GM12878 (cell line): ENCODE measurements at regions of chr1 and their contacts with region 1.

Region 1: DNA sequence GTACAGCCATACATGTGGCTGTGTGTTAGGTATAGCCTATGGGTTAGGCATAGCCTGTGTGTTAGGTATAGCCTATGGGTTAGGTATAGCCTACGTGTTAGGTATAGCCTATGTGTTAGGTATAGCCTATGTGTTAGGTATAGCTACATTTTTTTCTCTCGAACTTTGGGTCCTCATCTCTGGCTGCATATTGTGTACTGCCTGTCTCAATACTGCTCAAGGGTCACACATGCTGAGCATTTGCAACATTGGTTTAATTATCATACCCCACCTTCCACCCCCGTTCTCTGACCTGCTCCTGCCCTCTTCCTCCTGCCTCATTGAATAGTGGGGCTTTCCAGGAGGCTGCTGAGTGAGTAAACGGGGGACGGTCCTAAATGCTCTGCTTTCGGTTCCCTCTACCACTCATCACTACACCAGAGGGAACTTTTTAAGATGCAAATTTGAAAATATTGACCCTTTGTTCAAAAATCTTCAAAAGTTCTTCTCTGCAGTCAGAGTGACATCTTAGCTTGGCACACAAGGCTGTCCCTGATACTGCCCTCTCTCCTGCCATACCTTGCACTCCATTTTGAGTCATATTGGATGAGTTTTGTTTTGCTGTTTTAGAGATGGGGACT is 17.8 kb downstream of the OR2B11 start:
- DNase-seq: peak; percentile 81
- ATAC-seq: peak; percentile 96
- H3K4me3 ChIP-seq: no peak overlapping the region; the same call in 1 of the 2 replicates
- H3K27ac ChIP-seq: peak overlapping the region; percentile 63; the same call in 1 of the 2 replicates
- H3K4me1 ChIP-seq: peaks cover 29% of the 10 kb centered on the region
- H3K27me3 ChIP-seq: no peaks in the 10 kb centered on the region; a peak in 1 of 4 replicates
- CTCF ChIP-seq: no peak
- EP300 ChIP-seq: peak; percentile 92 to 95; a peak in 3 of 4 replicates
- POLR2A ChIP-seq: no peak
- RAD21 ChIP-seq: peak; percentile 13; the same call in 1 of the 2 replicates

Region 2: DNA sequence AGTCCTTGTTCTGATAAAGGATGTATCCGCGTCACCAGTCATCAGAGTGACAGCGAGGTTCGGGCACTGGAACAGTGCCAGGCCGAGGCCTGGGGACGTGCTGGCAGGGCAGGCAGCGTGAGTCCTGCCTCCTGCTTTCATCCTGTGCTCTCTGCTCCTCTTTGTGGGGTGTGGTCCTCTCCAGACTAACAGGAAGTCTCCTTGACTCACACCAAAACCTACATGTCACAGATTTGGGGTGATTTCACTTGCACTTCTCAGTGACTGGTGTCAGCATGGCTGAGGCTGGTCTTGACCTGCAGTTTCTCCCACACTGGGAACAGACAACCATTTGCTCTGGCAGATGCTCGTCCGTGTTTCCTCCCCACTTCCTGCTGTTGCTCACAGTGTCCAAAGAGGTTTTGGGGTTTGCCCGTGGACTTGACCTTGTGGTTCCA is 32.9 kb before region 1 on chr1:
- CTCF ChIA-PET with region 1: interaction called, 3 read pairs
- POLR2A ChIA-PET with region 1: interaction called, 3 read pairs
- RAD21 ChIA-PET with region 1: interaction called, 3 read pairs
- SMC1A ChIA-PET with region 1: interaction called, 6 read pairs
- in situ Hi-C with region 1: no loop called
- intact Hi-C with region 1: loop called (anchors 1 kb)
- DNase-seq: peak; percentile 85
- ATAC-seq: peak; percentile 81
- H3K4me3 ChIP-seq: 0 out of 2 replicates have a peak overlapping the region, but pooled peaks have one; percentile 9
- H3K27ac ChIP-seq: peak overlapping the region; percentile 63
- H3K4me1 ChIP-seq: peaks cover 34% of the 10 kb centered on the region
- H3K27me3 ChIP-seq: no peaks in the 10 kb centered on the region
- CTCF ChIP-seq: no peak
- EP300 ChIP-seq: peak in 1 of 2 experiments; percentile 23; a peak in 1 of 4 replicates
- POLR2A ChIP-seq: 0 out of 2 replicates have a peak, but pooled peaks have one; percentile 21
- RAD21 ChIP-seq: no peak

Region 3: DNA sequence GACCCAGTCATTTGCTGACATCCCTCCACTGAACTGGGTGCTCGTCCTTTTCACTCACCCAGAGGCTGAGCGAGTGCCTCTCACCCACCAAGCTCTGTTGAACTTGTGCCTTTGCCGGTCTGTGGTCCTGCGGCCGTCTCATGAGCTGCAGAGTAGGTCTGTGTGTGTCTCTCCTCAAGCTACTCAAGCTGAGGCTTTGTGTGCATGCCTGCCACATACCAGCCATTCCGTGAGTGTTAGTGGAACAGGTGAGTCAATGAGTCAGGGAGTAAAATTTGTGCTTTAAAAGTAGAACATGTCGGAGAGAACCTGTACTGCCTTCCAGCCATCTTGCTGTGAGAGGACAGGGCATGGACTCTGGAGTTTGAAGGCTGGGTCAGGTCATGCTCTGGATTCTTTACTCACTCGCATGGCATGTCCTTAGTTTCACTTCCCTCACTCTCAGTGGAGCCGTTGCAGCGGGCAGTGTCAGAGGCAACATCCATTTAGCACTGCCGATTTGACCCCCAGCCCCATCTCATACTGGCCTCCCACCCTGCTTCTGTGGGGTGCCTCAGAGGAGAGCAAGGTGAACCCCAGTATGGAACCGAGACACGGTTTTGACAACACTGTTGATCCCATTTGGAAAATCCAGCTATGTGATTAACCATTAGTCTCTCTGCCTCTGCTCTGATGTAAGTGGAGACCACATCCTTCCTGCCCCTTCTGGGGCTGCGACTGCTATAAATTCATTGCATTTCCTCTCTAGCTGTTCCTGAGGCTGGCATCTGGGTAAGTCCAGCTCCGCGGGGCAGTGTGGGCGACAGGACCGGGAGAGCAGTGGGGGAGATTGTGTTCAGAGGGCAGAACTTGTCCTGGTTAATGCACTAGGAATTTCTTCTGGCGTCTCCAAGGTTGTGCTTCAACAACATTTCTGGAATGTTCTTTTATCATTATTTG is 24.4 kb before region 1 on chr1 and contains the start of gene NLRP3:
- CTCF ChIA-PET with region 1: interaction called, 35 read pairs
- POLR2A ChIA-PET with region 1: interaction called, 5 read pairs
- RAD21 ChIA-PET with region 1: interaction called, 7 read pairs
- SMC1A ChIA-PET with region 1: interaction called, 47 read pairs
- in situ Hi-C with region 1: no loop called
- intact Hi-C with region 1: loop called (anchors 1 kb)
- DNase-seq: no peak
- ATAC-seq: peak; percentile 84
- H3K4me3 ChIP-seq: no peak within 1 kb of the TSS
- H3K27ac ChIP-seq: no peak within 1 kb of the TSS
- H3K4me1 ChIP-seq: peaks cover 14% of the 10 kb centered on the region
- H3K27me3 ChIP-seq: peaks cover 0 to 10% of the 10 kb centered on the region in 2 experiments; a peak in 2 of 4 replicates
- CTCF ChIP-seq: no peak
- EP300 ChIP-seq: no peak
- POLR2A ChIP-seq: no peak
- RAD21 ChIP-seq: no peak
- polyA plus RNA-seq, gene NLRP3: 2.5 to 3.4 TPM

Region 4: GRCh38 chr1:247421074-247421473 is 19.0 kb before region 1 on chr1:
- CTCF ChIA-PET with region 1: interaction called, 35 read pairs
- POLR2A ChIA-PET with region 1: interaction called, 5 read pairs
- RAD21 ChIA-PET with region 1: interaction called, 7 read pairs
- SMC1A ChIA-PET with region 1: interaction called, 47 read pairs
- in situ Hi-C with region 1: no loop called
- intact Hi-C with region 1: loop called (anchors 2 kb)
- DNase-seq: no peak
- ATAC-seq: peak; percentile 70
- H3K4me3 ChIP-seq: no peak overlapping the region
- H3K27ac ChIP-seq: no peak overlapping the region
- H3K4me1 ChIP-seq: peaks cover 5% of the 10 kb centered on the region
- H3K27me3 ChIP-seq: peaks cover 0 to 8% of the 10 kb centered on the region in 2 experiments; a peak in 2 of 4 replicates
- CTCF ChIP-seq: no peak
- EP300 ChIP-seq: no peak
- POLR2A ChIP-seq: no peak
- RAD21 ChIP-seq: no peak

Region 5: DNA sequence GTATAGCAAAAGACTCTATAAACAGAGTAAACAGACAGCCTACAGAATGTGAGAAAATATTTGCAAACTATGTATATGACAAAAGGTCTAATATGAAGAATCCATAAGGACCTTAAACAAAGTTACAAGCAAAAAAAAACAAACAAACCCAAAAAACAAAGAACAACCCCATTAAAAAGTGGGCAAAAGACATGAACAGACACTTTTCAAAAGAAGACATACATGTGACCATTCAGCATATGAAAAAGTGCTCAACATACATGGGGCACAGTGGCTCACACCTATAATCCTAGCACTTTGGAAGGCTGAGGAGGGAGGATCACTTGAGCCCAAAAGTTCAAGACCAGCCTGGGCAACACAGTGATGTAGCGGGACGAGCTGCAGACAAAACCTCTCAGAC is 35.7 kb after region 1 on chr1:
- CTCF ChIA-PET with region 1: no interaction called
- POLR2A ChIA-PET with region 1: no interaction called
- RAD21 ChIA-PET with region 1: interaction called, 5 read pairs
- SMC1A ChIA-PET with region 1: interaction called, 3 read pairs
- in situ Hi-C with region 1: no loop called
- intact Hi-C with region 1: loop called (anchors 5 kb)
- DNase-seq: no peak
- ATAC-seq: no peak; the same call in 2 of the 3 replicates
- H3K4me3 ChIP-seq: no peak overlapping the region
- H3K27ac ChIP-seq: peak overlapping the region; percentile 24; the same call in 1 of the 2 replicates
- H3K4me1 ChIP-seq: peaks cover 10% of the 10 kb centered on the region
- H3K27me3 ChIP-seq: no peaks in the 10 kb centered on the region
- CTCF ChIP-seq: no peak
- EP300 ChIP-seq: no peak
- POLR2A ChIP-seq: no peak
- RAD21 ChIP-seq: no peak

Region 6: DNA sequence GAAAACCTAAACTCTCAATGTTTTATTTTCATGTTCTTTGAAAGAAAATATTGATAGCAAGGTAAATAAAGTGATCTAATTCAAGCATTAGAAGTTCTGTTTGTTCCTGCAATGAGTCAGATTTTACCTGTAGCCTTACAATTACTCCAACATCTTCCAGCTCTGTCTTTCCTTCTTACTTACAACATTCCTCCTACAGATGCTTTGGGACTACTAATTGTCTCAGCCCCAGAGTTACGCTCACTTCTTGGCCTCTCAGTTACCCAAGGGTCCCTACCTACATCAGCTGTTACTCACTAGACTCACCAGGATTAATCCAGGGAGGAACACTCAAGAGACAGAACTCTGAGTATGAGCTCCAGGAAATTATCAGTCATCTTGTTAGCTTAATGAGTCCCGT is 357.4 kb after region 1 on chr1:
- CTCF ChIA-PET with region 1: no interaction called
- POLR2A ChIA-PET with region 1: no interaction called
- RAD21 ChIA-PET with region 1: no interaction called
- SMC1A ChIA-PET with region 1: no interaction called
- in situ Hi-C with region 1: no loop called
- intact Hi-C with region 1: no loop called
- DNase-seq: no peak
- ATAC-seq: no peak
- H3K4me3 ChIP-seq: no peak overlapping the region
- H3K27ac ChIP-seq: no peak overlapping the region
- H3K4me1 ChIP-seq: no peaks in the 10 kb centered on the region
- H3K27me3 ChIP-seq: no peaks in the 10 kb centered on the region
- CTCF ChIP-seq: no peak
- EP300 ChIP-seq: no peak
- POLR2A ChIP-seq: no peak
- RAD21 ChIP-seq: no peak